CD4-positive, alpha-beta memory T cell (primary cell): ENCODE measurements at regions of chr12 and their contacts with region 1.

Region 1: GRCh38 chr12:89621521-89621920 is 87.1 kb downstream of the ATP2B1 start:
- DNase-seq: no peak
- H3K4me3 ChIP-seq: no peak overlapping the region
- H3K4me3 Mint-ChIP-seq: no peak overlapping the region
- H3K27ac ChIP-seq: no peak overlapping the region
- H3K27ac Mint-ChIP-seq: no peak overlapping the region
- H3K4me1 ChIP-seq: peaks cover 4% of the 10 kb centered on the region
- H3K4me1 Mint-ChIP-seq: peaks cover 9 to 23% (median 13%) of the 10 kb centered on the region in 4 donors
- H3K27me3 ChIP-seq: no peaks in the 10 kb centered on the region
- H3K27me3 Mint-ChIP-seq: no peaks in the 10 kb centered on the region

Region 2: DNA sequence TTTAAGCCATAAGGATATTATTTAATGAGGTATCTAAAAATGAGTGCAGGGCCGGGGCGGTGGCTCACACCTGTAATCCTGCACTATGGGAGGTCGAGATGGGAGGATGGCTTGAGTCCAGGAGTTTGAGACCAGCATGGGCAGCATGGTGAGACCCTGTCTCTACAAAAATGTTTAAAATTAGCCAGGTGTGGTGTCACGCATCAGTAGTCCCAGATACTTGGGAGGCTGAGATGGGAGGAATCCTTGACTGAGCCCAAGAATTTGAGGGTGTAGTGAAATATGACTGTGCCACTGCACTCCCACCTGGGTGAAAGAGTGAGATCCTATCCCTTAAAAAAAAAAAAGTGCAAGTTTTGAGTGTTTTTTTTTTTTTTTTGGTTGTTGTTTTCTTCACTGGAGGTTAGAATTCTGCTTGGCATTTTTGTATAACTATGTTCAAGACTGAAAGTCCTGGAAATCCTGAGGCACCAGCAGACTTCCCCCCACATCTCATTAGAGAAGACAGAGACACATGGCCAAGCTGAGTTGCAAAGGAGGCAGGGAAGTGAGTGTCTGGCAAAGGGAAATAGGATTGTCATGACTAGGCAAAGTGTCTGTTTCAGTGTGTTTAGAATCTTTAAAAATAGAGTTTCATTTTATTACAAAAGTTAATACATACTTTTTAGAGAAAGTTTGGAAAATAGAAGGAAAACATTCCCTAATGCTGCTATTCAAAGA is 215.7 kb before region 1 on chr12:
- CTCF ChIA-PET with region 1: no interaction called
- POLR2A ChIA-PET with region 1: no interaction called
- intact Hi-C with region 1: no loop called
- DNase-seq: no peak
- H3K4me3 ChIP-seq: no peak overlapping the region
- H3K4me3 Mint-ChIP-seq: no peak overlapping the region
- H3K27ac ChIP-seq: no peak overlapping the region
- H3K27ac Mint-ChIP-seq: no peak overlapping the region
- H3K4me1 ChIP-seq: no peaks in the 10 kb centered on the region
- H3K4me1 Mint-ChIP-seq: peaks cover 0 to 2% (median 0%) of the 10 kb centered on the region in 4 donors
- H3K27me3 ChIP-seq: no peaks in the 10 kb centered on the region
- H3K27me3 Mint-ChIP-seq: no peaks in the 10 kb centered on the region

Region 3: DNA sequence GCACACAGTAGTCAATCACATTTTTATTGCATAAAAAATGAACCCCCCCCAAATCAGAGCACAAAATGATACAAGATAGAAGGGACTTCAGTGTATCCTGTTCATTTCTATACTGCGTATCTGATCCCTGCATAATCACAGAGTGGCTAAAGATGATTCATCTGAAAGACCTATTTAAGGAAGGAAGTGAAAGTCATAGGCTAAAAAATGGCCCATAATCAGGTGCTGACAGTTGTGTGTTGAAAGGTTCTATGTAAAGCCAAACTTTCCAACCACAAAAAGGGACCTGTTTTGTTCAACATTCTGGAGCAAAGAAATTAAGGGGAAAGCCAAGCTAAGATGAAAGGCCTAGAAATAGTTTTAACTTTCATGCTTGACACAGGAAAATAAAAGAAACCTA is 234.9 kb after region 1 on chr12:
- CTCF ChIA-PET with region 1: interaction called, 6 read pairs
- POLR2A ChIA-PET with region 1: no interaction called
- intact Hi-C with region 1: loop called (anchors 5 kb)
- DNase-seq: no peak
- H3K4me3 ChIP-seq: no peak overlapping the region
- H3K4me3 Mint-ChIP-seq: peak overlapping the region in 5 of 8 donors; percentile 32 to 61 (median 47)
- H3K27ac ChIP-seq: no peak overlapping the region
- H3K27ac Mint-ChIP-seq: peak overlapping the region in 6 of 7 donors; percentile 13 to 78 (median 50)
- H3K4me1 ChIP-seq: peaks cover 42% of the 10 kb centered on the region
- H3K4me1 Mint-ChIP-seq: peaks cover 36 to 65% (median 45%) of the 10 kb centered on the region in 4 donors
- H3K27me3 ChIP-seq: no peaks in the 10 kb centered on the region
- H3K27me3 Mint-ChIP-seq: no peaks in the 10 kb centered on the region